ENCODE measurements at regions of chr4 and their contacts with region 1.

Region 1: DNA sequence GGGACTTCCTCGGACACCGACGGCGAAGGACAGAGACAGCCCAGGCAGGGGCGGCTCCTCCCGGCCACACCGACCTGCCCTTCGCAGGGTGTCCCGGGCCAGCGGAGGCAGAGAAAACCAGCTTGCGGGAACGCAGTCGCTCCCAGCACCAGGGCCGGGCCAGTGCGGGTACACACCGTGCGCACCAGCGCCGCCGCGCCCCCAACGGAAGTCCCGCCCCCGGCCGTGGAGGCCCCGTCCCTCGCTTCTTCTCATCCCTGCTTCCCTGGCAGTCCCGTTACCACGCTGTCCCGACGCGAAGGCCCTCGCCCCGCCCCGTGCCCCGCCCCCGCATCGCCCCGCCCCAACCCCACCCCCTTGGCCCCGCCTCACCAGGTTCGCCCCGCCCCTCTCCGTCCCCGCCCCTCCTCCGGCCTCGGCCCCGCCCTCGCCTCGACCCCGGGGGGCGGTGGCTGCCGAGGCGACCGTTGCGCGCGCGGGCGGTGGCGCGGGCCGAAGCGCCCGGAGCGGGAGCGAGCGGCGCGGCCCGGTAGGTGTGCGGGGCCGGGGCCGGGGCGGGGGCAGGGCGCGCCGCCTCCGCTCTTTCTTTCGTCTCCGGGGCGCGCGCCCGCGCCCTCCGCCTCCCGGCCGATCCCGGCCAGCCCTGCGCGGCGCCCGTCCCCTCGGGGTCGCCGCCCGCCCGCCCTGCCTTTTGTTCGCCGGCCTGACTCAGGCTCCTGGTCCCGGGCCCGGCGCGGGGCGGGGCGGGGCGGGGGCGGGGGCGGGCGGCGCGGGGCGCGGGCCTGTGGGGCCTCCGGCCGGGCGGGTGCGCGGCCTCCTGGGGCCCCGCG is at the start of gene RGS12:
- DNase-seq: peak; percentile 94
- H3K4me3 Mint-ChIP-seq: peak within 1 kb of the TSS; percentile 93
- H3K27ac Mint-ChIP-seq: no peak within 1 kb of the TSS
- H3K4me1 Mint-ChIP-seq: peaks cover 9% of the 10 kb centered on the region
- H3K27me3 Mint-ChIP-seq: peaks cover under 1% of the 10 kb centered on the region
- total RNA-seq, gene RGS12: 8.7 to 8.9 TPM

Region 2: DNA sequence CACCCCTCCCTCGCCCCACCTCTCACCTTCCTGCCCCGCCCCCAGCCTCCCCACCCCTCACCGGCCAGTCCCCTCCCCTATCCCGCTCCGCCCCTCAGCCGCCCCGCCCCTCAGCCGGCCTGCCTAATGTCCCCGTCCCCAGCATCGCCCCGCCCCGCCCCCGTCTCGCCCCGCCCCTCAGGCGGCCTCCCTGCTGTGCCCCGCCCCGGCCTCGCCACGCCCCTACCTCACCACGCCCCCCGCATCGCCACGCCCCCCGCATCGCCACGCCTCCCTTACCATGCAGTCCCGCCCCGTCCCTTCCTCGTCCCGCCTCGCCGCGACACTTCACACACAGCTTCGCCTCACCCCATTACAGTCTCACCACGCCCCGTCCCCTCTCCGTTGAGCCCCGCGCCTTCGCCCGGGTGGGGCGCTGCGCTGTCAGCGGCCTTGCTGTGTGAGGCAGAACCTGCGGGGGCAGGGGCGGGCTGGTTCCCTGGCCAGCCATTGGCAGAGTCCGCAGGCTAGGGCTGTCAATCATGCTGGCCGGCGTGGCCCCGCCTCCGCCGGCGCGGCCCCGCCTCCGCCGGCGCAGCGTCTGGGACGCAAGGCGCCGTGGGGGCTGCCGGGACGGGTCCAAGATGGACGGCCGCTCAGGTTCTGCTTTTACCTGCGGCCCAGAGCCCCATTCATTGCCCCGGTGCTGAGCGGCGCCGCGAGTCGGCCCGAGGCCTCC is 218.5 kb before region 1 on chr4 and contains the starts of genes HTT and HTT-AS:
- CTCF ChIA-PET with region 1: no interaction called
- intact Hi-C with region 1: loop called (anchors 1 kb)
- DNase-seq: peak; percentile 99
- H3K4me3 Mint-ChIP-seq: peak within 1 kb of the TSS; percentile 83
- H3K27ac Mint-ChIP-seq: peak within 1 kb of the TSS; percentile 87
- H3K4me1 Mint-ChIP-seq: peaks cover 27% of the 10 kb centered on the region
- H3K27me3 Mint-ChIP-seq: no peaks in the 10 kb centered on the region
- total RNA-seq, gene HTT: 91.6 to 94.1 TPM
- total RNA-seq, gene HTT-AS: not detected

Region 3: GRCh38 chr4:3201718-3202702 is 90.8 kb before region 1 on chr4:
- CTCF ChIA-PET with region 1: no interaction called
- intact Hi-C with region 1: loop called (anchors 5 kb)
- DNase-seq: peak; percentile 88
- H3K4me3 Mint-ChIP-seq: peak overlapping the region; percentile 44
- H3K27ac Mint-ChIP-seq: peak overlapping the region; percentile 57
- H3K4me1 Mint-ChIP-seq: peaks cover 44% of the 10 kb centered on the region
- H3K27me3 Mint-ChIP-seq: no peaks in the 10 kb centered on the region

Region 4: DNA sequence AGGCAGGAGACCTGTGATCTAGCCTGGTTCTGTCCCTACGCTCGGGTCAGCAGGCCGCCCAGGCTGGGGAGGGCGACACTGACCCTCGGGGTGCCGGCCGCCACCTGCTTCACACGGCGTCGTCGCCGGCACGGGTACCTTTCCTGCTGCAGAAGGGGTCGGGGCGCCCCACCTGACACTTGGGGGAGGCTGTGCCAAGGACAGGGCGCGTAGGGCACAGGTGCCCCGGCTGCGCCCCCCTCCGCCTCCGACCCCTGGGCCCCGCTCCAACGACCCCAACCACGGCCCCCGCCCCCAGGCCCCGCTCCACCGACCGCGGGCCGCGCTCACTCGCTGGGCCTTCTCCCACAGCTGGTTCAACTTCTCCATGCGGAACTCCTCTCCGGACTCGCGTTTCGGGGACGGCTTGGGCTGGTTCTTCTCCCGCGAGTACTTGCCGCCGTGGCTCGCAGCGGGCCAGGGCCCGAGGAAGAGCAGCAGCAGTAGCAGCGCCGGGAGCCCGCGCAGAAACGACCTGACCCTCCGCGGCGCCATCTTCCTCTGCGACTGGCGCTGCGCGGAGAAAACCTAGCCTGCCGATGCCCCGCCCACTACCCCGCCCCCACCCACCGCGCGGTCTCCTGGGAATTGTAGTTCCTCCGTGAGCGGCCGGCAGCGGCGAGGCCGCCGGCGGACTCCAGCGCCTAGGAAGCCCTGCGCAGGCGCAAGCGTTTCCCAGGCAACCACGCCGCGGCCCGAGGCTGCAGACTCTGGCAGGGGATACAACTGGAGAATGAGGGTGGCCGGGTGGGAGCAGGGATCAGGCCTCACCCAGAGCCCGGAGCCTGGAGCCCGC is 239.3 kb after region 1 on chr4 and contains the start of gene LRPAP1:
- CTCF ChIA-PET with region 1: no interaction called
- intact Hi-C with region 1: loop called (anchors 1 kb)
- DNase-seq: peak; percentile 83
- H3K4me3 Mint-ChIP-seq: peak within 1 kb of the TSS; percentile 100
- H3K27ac Mint-ChIP-seq: peak within 1 kb of the TSS; percentile 90
- H3K4me1 Mint-ChIP-seq: peaks cover 32% of the 10 kb centered on the region
- H3K27me3 Mint-ChIP-seq: peaks cover 6% of the 10 kb centered on the region
- total RNA-seq, gene LRPAP1: 50.2 TPM

Region 5: GRCh38 chr4:4631150-4631549 is 1338.4 kb after region 1 on chr4:
- CTCF ChIA-PET with region 1: no interaction called
- intact Hi-C with region 1: no loop called
- DNase-seq: no peak
- H3K4me3 Mint-ChIP-seq: no peak overlapping the region
- H3K27ac Mint-ChIP-seq: no peak overlapping the region
- H3K4me1 Mint-ChIP-seq: peaks cover 3% of the 10 kb centered on the region
- H3K27me3 Mint-ChIP-seq: no peaks in the 10 kb centered on the region

Measured in activated naive CD4-positive, alpha-beta T cell treated with anti-CD3 and anti-CD28 coated beads for 36 hours (primary cell).